ENCODE measurements at regions of chr12 and their contacts with region 1.

Region 1: GRCh38 chr12:80763874-80764273 is 47.2 kb downstream of the MYF5 start:
- DNase-seq: no peak
- H3K4me3 ChIP-seq: no peak overlapping the region
- H3K27ac ChIP-seq: no peak overlapping the region
- H3K4me1 ChIP-seq: no peaks in the 10 kb centered on the region
- H3K27me3 ChIP-seq: no peaks in the 10 kb centered on the region
- CTCF ChIP-seq: peak; percentile 26 to 47 (median 34)
- POLR2A ChIP-seq: no peak

Region 2: DNA sequence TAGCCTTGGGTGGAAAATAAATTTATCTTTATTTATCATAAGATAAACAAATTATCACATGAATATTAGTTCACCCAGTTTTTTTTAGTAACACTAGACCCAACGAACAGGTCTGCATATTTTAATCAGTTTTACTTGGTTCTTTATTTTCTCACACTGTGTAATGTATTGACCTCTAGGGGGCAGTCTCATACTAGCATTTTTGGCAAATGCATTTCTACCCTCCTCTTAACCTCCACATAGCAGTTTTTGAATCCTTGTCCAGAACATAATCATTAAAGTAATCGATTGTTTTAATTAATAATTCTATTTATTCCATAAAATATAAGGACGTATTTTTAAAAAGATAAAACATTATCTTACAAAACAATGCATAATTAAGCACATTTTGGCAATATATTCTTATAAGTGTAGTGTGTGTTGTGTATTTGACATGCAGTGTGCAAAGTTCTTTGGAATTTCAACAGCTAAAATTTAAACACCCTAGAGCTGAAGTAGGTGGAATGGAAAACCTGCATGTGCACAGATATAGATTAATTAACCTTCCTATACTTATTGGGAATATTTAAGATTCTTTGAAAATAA is 351.4 kb before region 1 on chr12:
- intact Hi-C with region 1: loop called (anchors 10 kb)
- DNase-seq: no peak
- H3K4me3 ChIP-seq: no peak overlapping the region
- H3K27ac ChIP-seq: no peak overlapping the region
- H3K4me1 ChIP-seq: no peaks in the 10 kb centered on the region
- H3K27me3 ChIP-seq: no peaks in the 10 kb centered on the region
- CTCF ChIP-seq: peak; percentile 48 to 73 (median 65)
- POLR2A ChIP-seq: no peak

Region 3: DNA sequence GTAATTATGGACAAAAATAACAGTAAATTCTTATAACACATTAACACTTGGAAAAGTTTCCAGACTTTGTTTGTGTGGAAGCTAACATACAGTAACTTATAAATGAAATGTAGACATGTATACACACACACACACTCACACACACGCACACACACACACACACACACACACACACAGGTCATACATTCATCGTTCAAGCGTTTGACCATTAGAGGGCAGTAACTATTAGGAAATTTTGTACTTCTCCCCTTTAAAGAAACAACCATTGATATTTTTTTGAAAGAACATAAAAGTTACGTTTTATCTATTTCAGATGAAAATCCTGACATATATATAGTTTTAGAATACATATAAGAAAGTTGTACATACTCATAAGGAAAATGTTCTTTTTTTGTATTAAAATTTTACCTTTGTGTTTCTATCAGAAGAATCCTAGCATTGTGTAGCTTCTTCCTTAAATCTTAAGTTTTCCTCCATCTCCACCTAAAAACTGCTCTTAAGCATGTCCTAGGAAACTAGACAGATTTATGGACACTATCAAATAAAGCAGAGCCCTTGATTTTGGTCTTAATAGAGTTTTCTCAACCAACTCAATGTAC is 290.9 kb before region 1 on chr12:
- intact Hi-C with region 1: loop called (anchors 10 kb)
- DNase-seq: no peak
- H3K4me3 ChIP-seq: no peak overlapping the region
- H3K27ac ChIP-seq: no peak overlapping the region
- H3K4me1 ChIP-seq: no peaks in the 10 kb centered on the region
- H3K27me3 ChIP-seq: no peaks in the 10 kb centered on the region
- CTCF ChIP-seq: peak in 3 of 6 experiments; percentile 30 to 61 (median 46)
- POLR2A ChIP-seq: no peak

Region 4: DNA sequence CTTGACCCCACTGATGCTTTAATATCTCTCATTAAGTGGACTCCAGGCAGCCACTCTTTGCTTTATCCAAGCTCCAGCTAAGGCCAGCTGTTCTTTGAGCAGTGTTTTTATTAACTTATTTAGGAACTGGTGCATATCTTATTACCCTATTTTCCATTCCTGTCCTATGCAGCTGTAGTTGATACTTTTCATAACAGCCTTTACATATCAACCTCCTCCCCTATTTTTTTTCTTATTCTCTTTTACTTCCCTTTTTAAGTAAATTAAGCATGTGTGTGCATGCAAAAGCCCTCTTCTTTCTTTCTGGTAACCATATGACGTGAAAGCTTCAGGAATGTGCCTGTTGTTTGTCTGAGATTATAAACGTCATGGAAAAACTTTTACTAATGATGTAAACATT is 198.6 kb before region 1 on chr12:
- intact Hi-C with region 1: no loop called
- DNase-seq: no peak
- H3K4me3 ChIP-seq: no peak overlapping the region
- H3K27ac ChIP-seq: no peak overlapping the region
- H3K4me1 ChIP-seq: peaks cover 0 to 4% (median 0%) of the 10 kb centered on the region in 3 donors
- H3K27me3 ChIP-seq: no peaks in the 10 kb centered on the region
- CTCF ChIP-seq: no peak
- POLR2A ChIP-seq: no peak

Region 5: DNA sequence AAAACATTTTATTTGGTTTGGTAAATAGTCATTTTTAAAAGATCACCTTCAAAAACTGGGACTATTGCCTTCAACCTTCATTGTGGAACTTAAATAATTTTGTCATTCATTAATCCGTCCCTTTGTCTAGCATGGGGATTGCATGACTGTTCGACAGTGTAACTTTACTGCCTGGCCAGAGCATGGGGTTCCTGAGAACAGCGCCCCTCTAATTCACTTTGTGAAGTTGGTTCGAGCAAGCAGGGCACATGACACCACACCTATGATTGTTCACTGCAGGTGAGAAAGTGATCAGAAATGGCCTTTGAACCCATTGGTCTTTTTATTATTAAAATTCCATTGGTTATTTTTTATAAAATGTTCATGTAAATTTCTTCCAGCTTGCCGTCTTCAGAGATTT is 93.7 kb before region 1 on chr12:
- intact Hi-C with region 1: no loop called
- DNase-seq: no peak
- H3K4me3 ChIP-seq: no peak overlapping the region
- H3K27ac ChIP-seq: no peak overlapping the region
- H3K4me1 ChIP-seq: no peaks in the 10 kb centered on the region
- H3K27me3 ChIP-seq: no peaks in the 10 kb centered on the region
- CTCF ChIP-seq: no peak
- POLR2A ChIP-seq: no peak

Region 6: DNA sequence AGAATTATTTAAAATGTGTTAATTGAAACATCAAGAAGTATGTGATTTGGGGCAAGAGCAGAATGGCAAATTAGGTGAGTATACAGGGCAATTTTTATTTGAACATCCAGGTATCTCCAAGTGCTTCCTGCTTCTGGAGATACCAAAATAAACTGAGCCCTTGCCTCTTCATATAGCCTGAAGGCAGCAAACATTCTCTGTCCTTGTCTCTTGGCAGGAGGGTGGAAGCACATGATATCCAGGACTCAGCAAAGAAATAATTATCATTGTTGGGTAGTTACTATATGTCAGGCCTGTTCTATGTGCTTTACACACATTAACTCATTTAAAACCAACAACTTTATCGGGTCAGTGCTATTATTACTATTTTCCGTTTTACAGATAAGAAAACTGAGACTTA is 161.4 kb after region 1 on chr12:
- intact Hi-C with region 1: no loop called
- DNase-seq: no peak
- H3K4me3 ChIP-seq: no peak overlapping the region
- H3K27ac ChIP-seq: no peak overlapping the region
- H3K4me1 ChIP-seq: no peaks in the 10 kb centered on the region
- H3K27me3 ChIP-seq: no peaks in the 10 kb centered on the region
- CTCF ChIP-seq: no peak
- POLR2A ChIP-seq: no peak

Measured in esophagus squamous epithelium (tissue), 5 donors.